ENCODE measurements at regions of chr11 and their contacts with region 1.

Region 1: GRCh38 chr11:71089571-71089970 is 162.8 kb downstream of the SHANK2 start:
- DNase-seq: no peak
- ATAC-seq: no peak
- H3K4me3 ChIP-seq: no peak overlapping the region
- H3K27ac ChIP-seq: no peak overlapping the region
- H3K4me1 ChIP-seq: no peaks in the 10 kb centered on the region
- H3K27me3 ChIP-seq: no peaks in the 10 kb centered on the region
- CTCF ChIP-seq: no peak

Region 2: DNA sequence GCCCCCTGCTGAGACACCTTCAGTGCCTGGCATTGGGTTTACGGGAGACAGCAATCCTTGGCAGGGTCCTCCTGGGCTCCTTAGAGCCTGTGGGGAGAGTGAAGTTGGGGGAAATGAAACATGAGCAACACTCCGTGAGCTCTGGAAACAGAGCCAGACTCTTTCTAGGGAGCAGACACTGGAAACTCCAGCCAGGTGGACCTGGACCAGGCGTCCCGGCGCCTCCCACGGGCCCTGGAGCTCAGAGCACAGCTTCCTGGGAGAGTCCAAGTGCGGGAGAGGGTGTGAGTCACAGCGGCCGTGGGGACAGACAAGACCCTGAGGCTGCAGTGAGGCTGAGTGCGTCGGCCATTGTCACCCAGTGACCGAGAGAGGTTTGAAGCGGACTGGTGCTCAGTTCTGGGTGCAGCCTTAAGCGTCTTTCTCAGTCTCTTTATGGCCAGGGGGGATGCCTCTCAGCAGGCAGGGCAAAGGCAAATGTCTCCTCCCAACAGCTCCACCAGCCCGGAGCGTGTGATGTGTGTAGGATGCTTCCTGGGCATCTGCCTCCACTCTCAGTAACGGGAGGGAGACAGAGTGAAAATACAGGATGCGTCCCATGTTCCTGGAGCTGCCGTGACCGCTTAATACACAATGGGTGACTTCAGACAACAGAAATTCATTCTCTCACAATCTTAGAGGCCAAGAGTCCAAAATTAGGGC is 236.4 kb before region 1 on chr11:
- CTCF ChIA-PET with region 1: no interaction called
- POLR2A ChIA-PET with region 1: no interaction called
- in situ Hi-C with region 1: no loop called
- intact Hi-C with region 1: no loop called
- DNase-seq: no peak
- ATAC-seq: no peak
- H3K4me3 ChIP-seq: no peak overlapping the region
- H3K27ac ChIP-seq: no peak overlapping the region
- H3K4me1 ChIP-seq: no peaks in the 10 kb centered on the region
- H3K27me3 ChIP-seq: peaks cover 5% of the 10 kb centered on the region; the same call in 1 of the 2 replicates
- CTCF ChIP-seq: no peak

Region 3: DNA sequence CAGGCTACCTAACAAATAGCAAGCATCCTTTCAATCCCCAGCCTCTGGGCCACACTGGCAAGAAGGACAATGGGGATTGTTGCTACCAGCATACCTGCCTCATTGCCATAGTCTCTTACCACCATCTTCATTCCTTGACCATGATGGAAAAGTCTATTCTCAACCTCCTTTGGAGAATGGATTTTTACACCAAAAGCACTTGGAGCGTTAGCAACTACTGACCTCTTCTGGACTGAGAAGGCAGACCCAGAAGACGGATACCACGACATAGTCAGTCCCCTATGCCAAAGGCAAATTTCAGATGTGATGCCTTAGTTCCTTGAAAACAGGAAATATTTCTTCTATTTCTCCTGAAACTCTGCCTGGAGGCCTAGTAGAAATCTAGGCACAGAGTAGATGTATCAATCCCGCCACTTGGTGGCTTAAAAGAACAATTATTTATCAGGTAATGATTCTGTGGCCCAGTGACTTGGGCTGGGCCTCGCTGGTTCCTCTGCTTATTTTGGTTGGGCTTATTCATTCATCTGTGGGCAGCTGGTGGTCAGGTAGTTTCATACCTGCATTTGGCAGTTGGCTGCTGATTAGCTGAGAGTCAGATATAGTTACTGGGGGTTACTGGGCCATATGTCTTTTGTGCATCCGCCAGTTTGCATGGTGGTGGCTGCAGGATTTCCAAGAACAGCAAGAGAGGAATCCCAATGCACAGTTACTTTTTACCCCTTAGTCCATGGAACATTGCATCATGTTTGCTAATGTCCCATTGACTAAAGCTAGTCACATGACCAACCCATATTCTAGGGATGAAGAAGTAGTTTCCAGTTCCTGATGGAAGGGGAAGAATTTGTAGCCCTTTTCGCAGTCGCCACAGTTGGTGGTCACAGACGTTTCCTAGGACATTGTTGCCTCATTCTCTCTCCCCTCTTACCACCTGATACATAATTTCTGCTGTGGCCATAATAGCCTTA is 283.4 kb after region 1 on chr11:
- CTCF ChIA-PET with region 1: interaction called, 9 read pairs
- POLR2A ChIA-PET with region 1: no interaction called
- in situ Hi-C with region 1: no loop called
- intact Hi-C with region 1: loop called (anchors 2 kb)
- DNase-seq: peak; percentile 5
- ATAC-seq: peak; percentile 77
- H3K4me3 ChIP-seq: no peak overlapping the region
- H3K27ac ChIP-seq: no peak overlapping the region
- H3K4me1 ChIP-seq: no peaks in the 10 kb centered on the region
- H3K27me3 ChIP-seq: peaks cover 6% of the 10 kb centered on the region
- CTCF ChIP-seq: peak; percentile 82

Measured in Panc1 (cell line).